ENCODE measurements at regions of chr1 and their contacts with region 1.

Region 1: GRCh38 chr1:208159555-208160258 is 84.5 kb downstream of the PLXNA2 start:
- DNase-seq: peak; percentile 51
- H3K4me3 ChIP-seq: no peak overlapping the region
- H3K27me3 ChIP-seq: no peaks in the 10 kb centered on the region
- CTCF ChIP-seq: no peak

Region 2: GRCh38 chr1:208172423-208173145 is 12.9 kb after region 1 on chr1:
- CTCF ChIA-PET with region 1: interaction called, 10 read pairs
- POLR2A ChIA-PET with region 1: interaction called, 3 read pairs
- DNase-seq: no peak
- H3K4me3 ChIP-seq: no peak overlapping the region
- H3K27me3 ChIP-seq: no peaks in the 10 kb centered on the region
- CTCF ChIP-seq: no peak

Region 3: GRCh38 chr1:208238710-208239472 is 79.2 kb after region 1 on chr1:
- CTCF ChIA-PET with region 1: interaction called, 10 read pairs
- POLR2A ChIA-PET with region 1: no interaction called
- DNase-seq: no peak
- H3K4me3 ChIP-seq: no peak overlapping the region
- H3K27me3 ChIP-seq: no peaks in the 10 kb centered on the region
- CTCF ChIP-seq: peak; percentile 86

Measured in BJ (cell line).